Sigmoid colon (tissue), 7 donors: ENCODE measurements at regions of chr2 and their contacts with region 1.

Region 1: DNA sequence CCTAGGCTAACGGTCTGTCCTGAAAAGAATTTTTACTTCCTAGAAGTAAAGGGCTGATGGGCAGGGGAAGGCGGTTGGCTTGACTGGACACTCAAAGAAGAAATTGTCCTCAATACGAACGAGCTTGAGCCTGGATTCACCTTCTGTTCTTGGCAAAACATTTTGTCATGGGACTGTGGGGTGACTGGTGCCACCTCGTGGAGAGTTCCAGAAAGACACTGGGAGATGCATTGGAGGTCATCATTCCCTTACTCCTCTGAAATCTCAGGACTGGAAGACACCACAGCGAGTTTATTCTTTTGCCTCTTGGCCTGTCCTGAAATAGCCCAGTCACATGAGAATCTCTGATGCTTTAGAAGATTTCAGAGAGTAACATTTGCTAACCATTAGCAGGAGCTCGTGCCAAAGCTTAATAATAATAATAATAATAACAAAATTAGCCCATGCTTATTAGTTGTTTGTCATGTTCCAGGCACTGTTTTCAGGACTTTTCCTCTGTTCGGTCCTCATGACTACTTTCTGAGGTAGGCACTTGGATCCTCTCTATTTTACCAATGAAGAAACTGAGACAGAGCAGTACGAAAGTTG is 44.5 kb downstream of the TMEM182 start:
- DNase-seq: peak; percentile 84
- H3K4me3 ChIP-seq: no peak overlapping the region
- H3K27ac ChIP-seq: no peak overlapping the region
- H3K4me1 ChIP-seq: peaks cover 0 to 3% (median 0%) of the 10 kb centered on the region in 4 donors
- H3K27me3 ChIP-seq: no peaks in the 10 kb centered on the region
- CTCF ChIP-seq: peak; percentile 65 to 81 (median 73)
- EP300 ChIP-seq: no peak
- POLR2A ChIP-seq: no peak

Region 2: DNA sequence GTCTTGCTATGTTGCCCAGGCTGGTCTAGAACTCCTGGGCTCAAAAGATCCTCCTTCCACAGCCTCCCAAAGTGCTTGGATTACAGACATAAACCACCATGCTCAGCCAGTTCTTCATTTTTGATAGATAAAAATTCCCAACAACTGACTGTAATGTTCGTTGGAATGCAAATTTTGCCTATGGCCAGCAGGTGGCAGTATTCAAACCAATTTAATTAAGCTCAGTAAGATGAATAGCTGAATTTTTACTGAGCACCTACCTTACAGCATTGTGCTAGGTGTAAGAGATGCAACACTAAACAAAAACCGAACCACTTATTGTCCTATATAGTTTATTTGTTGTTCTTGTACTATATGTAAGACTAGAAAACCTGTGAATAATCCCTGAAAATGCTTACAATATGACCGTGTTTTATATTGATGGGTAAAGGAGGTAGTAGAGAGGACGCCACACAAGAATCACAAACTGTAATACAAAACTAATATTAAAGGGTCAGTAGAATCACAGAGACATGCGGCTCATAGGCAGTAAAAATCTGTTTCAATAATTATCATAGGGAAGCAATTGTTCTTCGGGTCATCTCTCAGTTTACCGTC is 52.7 kb before region 1 on chr2:
- intact Hi-C with region 1: loop called (anchors 1 kb)
- DNase-seq: no peak
- H3K4me3 ChIP-seq: no peak overlapping the region
- H3K27ac ChIP-seq: no peak overlapping the region
- H3K4me1 ChIP-seq: no peaks in the 10 kb centered on the region
- H3K27me3 ChIP-seq: no peaks in the 10 kb centered on the region
- CTCF ChIP-seq: peak; percentile 44 to 73 (median 60)
- EP300 ChIP-seq: no peak
- POLR2A ChIP-seq: no peak